Prostate gland (tissue), 2 donors: ENCODE measurements at regions of chr22 and their contacts with region 1.

Region 1: DNA sequence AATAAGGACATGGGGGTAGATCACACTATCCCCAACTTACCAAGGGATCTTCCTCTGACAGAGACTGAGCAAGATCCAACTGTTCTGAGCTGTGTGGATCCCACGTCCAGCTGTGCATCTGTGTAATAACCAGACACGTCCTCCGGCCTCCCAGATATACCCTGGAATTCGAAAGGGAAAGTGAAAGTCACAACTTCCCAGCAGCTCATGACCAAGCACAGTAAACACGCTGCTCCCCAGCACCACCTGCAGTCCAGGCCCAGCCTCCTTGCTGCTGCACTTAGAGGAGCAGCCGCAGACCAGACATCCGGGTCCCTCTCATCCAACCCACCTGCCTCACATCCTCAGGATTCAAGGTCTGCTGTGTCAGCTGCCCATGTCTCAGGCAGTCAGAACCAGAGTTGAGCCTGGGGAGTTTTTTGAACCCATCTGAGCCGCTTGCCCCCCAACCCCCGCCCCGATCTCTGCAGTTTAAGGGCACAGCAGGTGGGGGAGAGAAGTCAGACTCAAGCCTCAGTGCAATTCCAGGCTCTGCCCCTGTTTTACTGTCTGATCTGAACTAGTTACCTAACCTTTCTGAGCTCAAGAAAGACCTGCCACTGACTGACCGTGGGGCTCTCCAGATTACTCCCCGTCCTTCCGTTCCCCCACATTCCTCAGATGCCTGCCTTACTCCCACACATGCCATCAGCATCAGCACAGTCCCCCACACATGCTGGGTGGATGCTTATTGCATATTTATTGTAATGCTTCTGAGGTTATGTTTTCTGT is at the start of gene APOL2:
- DNase-seq: peak; percentile 92
- H3K4me3 ChIP-seq: peak within 1 kb of the TSS; percentile 44 to 60
- H3K27ac ChIP-seq: peak within 1 kb of the TSS; percentile 89 to 95
- H3K4me1 ChIP-seq: peaks cover 17% of the 10 kb centered on the region
- H3K27me3 ChIP-seq: no peaks in the 10 kb centered on the region
- CTCF ChIP-seq: peak; percentile 60 to 87 (median 79)
- POLR2A ChIP-seq: peak; percentile 88
- total RNA-seq, gene APOL2: 35.2 to 64.1 TPM

Region 2: GRCh38 chr22:35425971-35426800 is 813.4 kb before region 1 on chr22:
- intact Hi-C with region 1: no loop called
- DNase-seq: no peak
- H3K4me3 ChIP-seq: no peak overlapping the region
- H3K27ac ChIP-seq: no peak overlapping the region
- H3K4me1 ChIP-seq: no peaks in the 10 kb centered on the region
- H3K27me3 ChIP-seq: no peaks in the 10 kb centered on the region
- CTCF ChIP-seq: no peak
- POLR2A ChIP-seq: no peak

Region 3: GRCh38 chr22:36156515-36157419 is 82.8 kb before region 1 on chr22:
- intact Hi-C with region 1: loop called (anchors 10 kb)
- DNase-seq: peak; percentile 66
- H3K4me3 ChIP-seq: peak overlapping the region; percentile 21 to 25
- H3K27ac ChIP-seq: peak overlapping the region; percentile 86 to 91
- H3K4me1 ChIP-seq: peaks cover 5% of the 10 kb centered on the region
- H3K27me3 ChIP-seq: no peaks in the 10 kb centered on the region
- CTCF ChIP-seq: no peak
- POLR2A ChIP-seq: no peak

Region 4: DNA sequence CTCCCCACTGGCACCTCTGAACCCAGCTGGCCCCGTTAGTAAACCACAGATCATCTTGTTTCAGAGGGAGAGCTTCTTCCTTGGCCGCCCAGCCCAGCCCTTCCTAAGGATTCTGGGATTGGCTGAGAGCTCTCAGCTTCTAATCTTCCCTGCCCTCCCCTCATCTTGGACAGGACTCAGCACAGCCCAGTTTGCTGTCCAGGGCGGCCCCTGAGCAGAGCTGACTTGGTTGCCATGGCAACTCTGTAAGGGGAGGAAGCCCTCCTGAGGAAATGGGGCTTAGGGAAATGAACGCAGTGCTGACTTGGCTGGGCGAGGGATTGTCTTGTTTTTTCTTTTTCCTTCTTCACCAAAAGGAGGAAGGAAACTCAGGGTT is 42.5 kb before region 1 on chr22:
- intact Hi-C with region 1: no loop called
- DNase-seq: no peak
- H3K4me3 ChIP-seq: no peak overlapping the region
- H3K27ac ChIP-seq: peak overlapping the region; percentile 67 to 69
- H3K4me1 ChIP-seq: peaks cover 6% of the 10 kb centered on the region
- H3K27me3 ChIP-seq: no peaks in the 10 kb centered on the region
- CTCF ChIP-seq: no peak
- POLR2A ChIP-seq: no peak